ENCODE measurements at regions of chr1 and their contacts with region 1.

Region 1: DNA sequence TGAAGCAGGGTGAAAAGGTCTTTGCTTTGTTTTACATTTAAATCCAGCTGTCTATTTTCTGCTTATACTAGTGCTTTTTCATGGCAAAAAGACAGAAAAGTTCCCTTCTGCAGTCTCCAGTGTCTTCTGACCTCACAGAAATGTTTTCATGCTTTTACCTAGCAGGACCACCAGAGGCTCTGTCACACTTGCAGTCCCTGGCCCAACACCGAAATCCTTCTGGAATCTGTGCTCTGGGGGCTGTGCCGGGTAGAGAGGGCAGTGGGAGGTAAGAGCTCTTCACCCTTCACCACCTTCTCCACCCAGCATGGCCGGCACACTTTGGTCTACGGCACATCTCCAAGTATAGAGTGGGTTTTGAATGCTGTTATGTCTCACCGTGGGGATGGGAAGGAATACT is 20.8 kb downstream of the GNAT2 start:
- DNase-seq: peak in 2 of 3 donors; percentile 34 to 35
- H3K4me3 ChIP-seq: no peak overlapping the region
- H3K27ac ChIP-seq: no peak overlapping the region
- H3K4me1 ChIP-seq: peaks cover 0 to 3% (median 0%) of the 10 kb centered on the region in 4 experiments
- H3K27me3 ChIP-seq: no peaks in the 10 kb centered on the region

Region 2: DNA sequence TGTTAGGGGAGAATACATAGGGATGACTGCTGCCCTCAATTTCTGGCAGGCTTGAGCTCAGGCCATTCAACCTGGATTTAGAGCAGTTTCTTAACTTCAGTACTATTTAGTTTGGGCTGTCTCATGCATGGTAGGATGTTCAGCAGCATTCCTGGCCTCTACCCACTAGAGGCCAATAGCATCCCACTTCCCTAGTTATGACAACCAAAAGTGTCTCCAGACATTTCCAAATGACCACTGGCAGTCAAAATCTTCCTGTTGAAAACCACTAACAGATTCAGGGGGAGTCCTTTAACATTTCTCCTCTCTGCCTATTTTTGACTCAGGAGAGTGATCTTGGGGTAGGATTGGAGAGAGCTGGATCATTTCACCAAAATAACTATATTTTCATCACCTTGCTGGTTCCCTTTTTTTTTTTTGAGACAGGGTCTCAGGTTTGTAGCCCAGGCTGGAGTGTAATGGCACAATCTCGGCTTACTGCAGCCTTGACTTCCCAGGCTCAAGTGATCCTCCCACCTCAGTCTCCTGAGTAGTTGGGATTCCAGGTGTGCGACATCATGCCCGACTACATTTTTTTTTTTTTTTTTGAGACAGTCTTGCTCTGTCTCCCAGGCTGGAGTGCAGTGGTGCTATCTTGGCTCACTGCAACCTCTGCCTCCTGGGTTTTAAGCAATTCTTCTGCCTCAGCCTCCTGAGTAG is 12.1 kb after region 1 on chr1:
- CTCF ChIA-PET with region 1: interaction called, 67 read pairs
- POLR2A ChIA-PET with region 1: interaction called, 3 read pairs
- DNase-seq: no peak
- H3K4me3 ChIP-seq: no peak overlapping the region
- H3K27ac ChIP-seq: no peak overlapping the region
- H3K4me1 ChIP-seq: peaks cover 2 to 17% (median 7%) of the 10 kb centered on the region in 4 experiments
- H3K27me3 ChIP-seq: no peaks in the 10 kb centered on the region

Region 3: GRCh38 chr1:109630081-109630897 is 31.6 kb after region 1 on chr1:
- CTCF ChIA-PET with region 1: interaction called, 78 read pairs
- POLR2A ChIA-PET with region 1: no interaction called
- DNase-seq: peak in 2 of 3 donors; percentile 51 to 53
- H3K4me3 ChIP-seq: no peak overlapping the region
- H3K27ac ChIP-seq: no peak overlapping the region
- H3K4me1 ChIP-seq: peaks cover 0 to 9% (median 6%) of the 10 kb centered on the region in 4 experiments
- H3K27me3 ChIP-seq: no peaks in the 10 kb centered on the region